AG04450 (cell line): ENCODE measurements at regions of chr12 and their contacts with region 1.

Region 1: DNA sequence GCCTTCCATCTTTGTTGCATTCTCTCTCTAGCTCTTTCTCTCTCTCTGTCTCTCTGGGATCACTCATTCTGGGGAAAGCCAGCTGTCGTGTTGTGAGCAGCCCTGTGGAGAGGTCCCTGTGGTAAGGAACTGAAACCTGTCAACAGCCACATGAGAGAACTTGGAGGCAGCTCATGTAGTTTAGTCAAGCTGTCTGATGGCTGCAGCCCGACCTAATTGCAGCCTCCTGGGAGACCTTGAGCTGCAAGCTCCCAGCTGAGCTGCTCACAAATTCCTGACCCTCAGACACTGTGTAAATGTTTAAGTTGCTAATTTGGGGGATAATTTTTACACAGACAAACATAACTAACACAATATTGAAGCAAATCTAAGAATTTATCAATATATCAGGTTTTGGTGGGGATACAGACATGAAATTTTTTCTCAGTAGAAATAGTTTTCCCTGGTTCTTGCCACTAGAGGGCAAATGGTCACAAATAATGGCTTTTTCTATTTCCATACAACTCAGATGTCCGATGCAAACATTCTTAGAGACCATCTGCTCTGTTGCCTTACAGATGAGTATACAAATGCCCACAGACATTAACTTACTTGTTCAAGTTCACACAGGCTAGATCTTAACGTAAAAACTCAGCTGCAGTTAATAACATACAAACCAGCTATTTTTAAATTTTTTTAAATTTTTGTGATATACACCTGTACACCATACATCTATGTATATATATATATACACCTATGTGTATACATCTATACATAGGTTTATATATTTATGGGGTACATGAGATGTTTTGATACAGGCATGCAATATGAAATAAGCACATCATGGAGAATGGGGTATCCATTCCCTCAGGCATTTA is 15.5 kb upstream of the KRR1 start:
- DNase-seq: peak; percentile 71
- H3K4me3 ChIP-seq: no peak overlapping the region
- H3K27ac ChIP-seq: no peak overlapping the region
- H3K27me3 ChIP-seq: no peaks in the 10 kb centered on the region
- CTCF ChIP-seq: peak; percentile 69

Region 2: DNA sequence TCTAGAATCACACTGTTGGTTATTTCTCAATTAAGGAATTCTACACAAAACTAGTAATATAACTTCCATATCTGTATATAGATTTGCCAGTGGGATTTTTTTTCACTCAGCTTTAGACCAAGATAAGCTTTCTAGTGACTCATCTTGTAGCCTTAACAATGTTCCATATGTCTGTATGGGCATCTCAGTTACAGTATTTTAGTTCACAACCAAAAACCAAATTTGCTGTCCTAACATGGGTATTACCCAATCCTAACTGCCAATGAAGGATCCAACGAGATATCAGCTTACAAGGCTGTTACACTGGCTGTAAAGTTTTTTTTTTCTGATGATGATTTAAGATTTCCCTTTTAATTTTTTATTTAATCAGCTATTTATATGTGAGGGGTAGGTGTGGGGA is 16.1 kb after region 1 on chr12:
- CTCF ChIA-PET with region 1: interaction called, 12 read pairs
- POLR2A ChIA-PET with region 1: no interaction called
- DNase-seq: no peak
- H3K4me3 ChIP-seq: no peak overlapping the region
- H3K27ac ChIP-seq: no peak overlapping the region
- H3K27me3 ChIP-seq: no peaks in the 10 kb centered on the region
- CTCF ChIP-seq: no peak

Region 3: GRCh38 chr12:75750716-75751306 is 223.9 kb after region 1 on chr12:
- CTCF ChIA-PET with region 1: interaction called, 17 read pairs
- POLR2A ChIA-PET with region 1: no interaction called
- DNase-seq: peak; percentile 70
- H3K4me3 ChIP-seq: no peak overlapping the region
- H3K27ac ChIP-seq: no peak overlapping the region
- H3K27me3 ChIP-seq: no peaks in the 10 kb centered on the region
- CTCF ChIP-seq: no peak

Region 4: DNA sequence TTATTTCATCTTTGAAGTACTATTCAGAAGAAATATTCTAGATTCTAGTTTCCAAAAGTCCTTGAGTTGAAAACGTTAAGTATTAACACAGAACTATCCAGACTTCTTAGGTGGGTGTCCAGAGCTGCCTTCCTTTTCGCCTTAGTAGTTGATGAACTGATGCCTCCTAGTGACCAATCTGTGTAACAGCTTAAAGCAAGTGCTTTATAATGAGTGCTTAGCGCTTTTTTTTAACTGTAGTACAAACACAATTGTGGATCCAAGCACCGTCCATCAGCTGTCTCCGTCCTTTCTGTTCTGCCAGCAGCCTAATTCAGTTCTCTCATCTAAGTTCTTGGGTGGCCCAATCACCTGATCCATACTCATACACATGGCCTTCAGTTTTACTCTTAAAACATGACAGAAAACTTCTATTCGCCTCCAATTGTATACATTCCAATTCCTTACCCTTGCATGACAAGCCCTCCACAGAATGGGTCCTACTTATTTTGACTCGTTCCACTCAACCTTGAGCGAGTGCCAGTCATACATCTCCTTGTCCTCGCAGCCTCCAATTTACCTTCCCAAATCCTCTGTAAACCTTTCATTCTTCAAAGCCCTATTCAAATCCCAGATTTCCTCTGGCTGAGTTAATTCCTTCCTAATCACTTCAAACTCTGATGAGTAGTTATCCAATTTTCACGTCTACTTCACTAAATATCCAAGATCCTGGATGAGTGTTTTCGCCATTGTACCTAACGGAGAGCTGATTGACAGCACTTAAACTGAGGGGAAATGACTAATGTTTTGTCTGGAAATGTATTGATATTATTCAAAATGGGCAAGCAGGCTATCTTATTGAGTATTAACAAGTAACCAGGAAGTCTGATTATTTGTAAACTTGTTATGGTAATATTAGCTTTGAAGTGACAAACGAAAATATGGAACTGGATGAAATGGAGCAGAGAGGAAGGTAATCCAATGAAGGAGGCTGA is 510.5 kb after region 1 on chr12:
- CTCF ChIA-PET with region 1: interaction called, 44 read pairs
- POLR2A ChIA-PET with region 1: no interaction called
- DNase-seq: peak; percentile 67
- H3K4me3 ChIP-seq: no peak overlapping the region
- H3K27ac ChIP-seq: no peak overlapping the region
- H3K27me3 ChIP-seq: no peaks in the 10 kb centered on the region
- CTCF ChIP-seq: peak; percentile 83

Region 5: GRCh38 chr12:76348079-76348901 is 821.4 kb after region 1 on chr12 and contains the start of gene BBS10:
- CTCF ChIA-PET with region 1: interaction called, 10 read pairs
- POLR2A ChIA-PET with region 1: no interaction called
- DNase-seq: peak; percentile 85
- H3K4me3 ChIP-seq: peak within 1 kb of the TSS; percentile 86
- H3K27ac ChIP-seq: peak within 1 kb of the TSS; percentile 86
- H3K27me3 ChIP-seq: no peaks in the 10 kb centered on the region
- CTCF ChIP-seq: peak; percentile 47
- polyA plus RNA-seq, gene BBS10: 13.5 and 20.0 TPM in 2 replicates